ENCODE measurements at regions of chr9 and their contacts with region 1.

Region 1: GRCh38 chr9:68619636-68620035 is 79.0 kb upstream of the TMEM252 start:
- DNase-seq: no peak
- H3K4me3 ChIP-seq: no peak overlapping the region
- H3K27ac ChIP-seq: no peak overlapping the region
- H3K4me1 ChIP-seq: no peaks in the 10 kb centered on the region
- H3K27me3 ChIP-seq: no peaks in the 10 kb centered on the region
- CTCF ChIP-seq: no peak
- EP300 ChIP-seq: no peak
- POLR2A ChIP-seq: no peak

Region 2: GRCh38 chr9:68664036-68664435 is 44.4 kb after region 1 on chr9:
- in situ Hi-C with region 1: loop called in 1 of 4 experiments (anchors 5 kb)
- intact Hi-C with region 1: no loop called
- DNase-seq: no peak
- H3K4me3 ChIP-seq: no peak overlapping the region
- H3K27ac ChIP-seq: no peak overlapping the region
- H3K4me1 ChIP-seq: no peaks in the 10 kb centered on the region
- H3K27me3 ChIP-seq: no peaks in the 10 kb centered on the region
- CTCF ChIP-seq: no peak
- EP300 ChIP-seq: no peak
- POLR2A ChIP-seq: no peak

Measured in transverse colon (tissue), 4 donors.